ENCODE measurements at regions of chr11 and their contacts with region 1.

Region 1: GRCh38 chr11:35667271-35667670 is 4.7 kb downstream of the TRIM44 start:
- DNase-seq: no peak
- H3K4me3 ChIP-seq: no peak overlapping the region
- H3K27ac ChIP-seq: no peak overlapping the region
- H3K4me1 ChIP-seq: peaks cover 39% of the 10 kb centered on the region
- H3K27me3 ChIP-seq: no peaks in the 10 kb centered on the region
- CTCF ChIP-seq: no peak
- POLR2A ChIP-seq: no peak

Region 2: GRCh38 chr11:35651263-35651662 is 16.0 kb before region 1 on chr11:
- intact Hi-C with region 1: loop called (anchors 1 kb)
- DNase-seq: no peak
- H3K4me3 ChIP-seq: no peak overlapping the region
- H3K27ac ChIP-seq: no peak overlapping the region
- H3K4me1 ChIP-seq: no peaks in the 10 kb centered on the region
- H3K27me3 ChIP-seq: no peaks in the 10 kb centered on the region
- CTCF ChIP-seq: no peak
- POLR2A ChIP-seq: no peak